ENCODE measurements at regions of chr16 and their contacts with region 1.

Region 1: DNA sequence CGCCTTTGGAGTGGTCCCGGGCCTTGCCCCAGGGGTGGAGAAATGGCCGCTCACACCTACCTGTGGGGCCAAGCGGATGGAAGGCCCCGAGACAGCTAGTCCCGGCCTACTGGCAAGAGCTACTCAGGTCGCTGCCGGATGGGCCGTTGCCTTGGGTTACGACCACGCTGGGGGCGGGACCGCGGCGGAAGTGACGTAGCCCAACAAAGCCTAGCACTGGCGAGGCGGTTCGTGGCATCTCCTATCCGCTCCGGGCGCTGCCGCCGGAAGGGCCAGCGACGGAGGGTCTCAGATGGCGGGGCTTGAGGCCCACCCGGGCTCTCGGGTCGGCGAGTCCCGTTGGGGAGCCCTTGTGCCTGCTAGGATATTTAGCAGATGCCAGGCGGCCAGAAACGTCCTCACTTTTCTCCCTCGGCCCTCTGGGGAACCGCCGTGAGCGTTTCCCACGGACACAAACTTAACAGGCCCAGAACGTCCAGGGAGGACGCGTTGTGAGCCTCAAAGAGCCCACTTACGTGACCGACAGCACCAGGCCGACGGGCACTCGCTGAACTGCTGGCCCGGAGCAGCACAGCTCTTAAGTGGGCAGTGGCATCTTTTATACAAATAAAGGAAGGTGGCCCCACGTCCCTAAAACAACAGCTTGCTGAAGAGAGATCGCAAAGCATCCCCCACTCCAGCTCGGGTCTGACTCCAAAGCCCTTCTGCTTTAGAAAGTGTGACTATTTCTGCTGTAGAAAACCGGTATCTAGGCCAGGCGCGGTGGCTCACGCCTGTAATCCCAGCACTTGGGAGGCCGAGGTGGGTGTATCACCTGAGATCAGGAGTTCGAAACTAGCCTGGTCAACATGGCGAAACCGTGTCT is at the start of gene C16orf46:
- DNase-seq: peak; percentile 98
- H3K4me3 ChIP-seq: peak within 1 kb of the TSS; percentile 5 to 38 (median 14)
- H3K27ac ChIP-seq: peak within 1 kb of the TSS; percentile 88 to 96 (median 93)
- H3K4me1 ChIP-seq: peaks cover 21 to 24% of the 10 kb centered on the region in 2 donors
- H3K27me3 ChIP-seq: no peaks in the 10 kb centered on the region
- CTCF ChIP-seq: peak in 2 of 6 experiments; percentile 6 to 12
- POLR2A ChIP-seq: peak; percentile 5 to 84
- total RNA-seq, gene C16orf46: 3.1 to 14.2 (median 9.7) TPM

Region 2: DNA sequence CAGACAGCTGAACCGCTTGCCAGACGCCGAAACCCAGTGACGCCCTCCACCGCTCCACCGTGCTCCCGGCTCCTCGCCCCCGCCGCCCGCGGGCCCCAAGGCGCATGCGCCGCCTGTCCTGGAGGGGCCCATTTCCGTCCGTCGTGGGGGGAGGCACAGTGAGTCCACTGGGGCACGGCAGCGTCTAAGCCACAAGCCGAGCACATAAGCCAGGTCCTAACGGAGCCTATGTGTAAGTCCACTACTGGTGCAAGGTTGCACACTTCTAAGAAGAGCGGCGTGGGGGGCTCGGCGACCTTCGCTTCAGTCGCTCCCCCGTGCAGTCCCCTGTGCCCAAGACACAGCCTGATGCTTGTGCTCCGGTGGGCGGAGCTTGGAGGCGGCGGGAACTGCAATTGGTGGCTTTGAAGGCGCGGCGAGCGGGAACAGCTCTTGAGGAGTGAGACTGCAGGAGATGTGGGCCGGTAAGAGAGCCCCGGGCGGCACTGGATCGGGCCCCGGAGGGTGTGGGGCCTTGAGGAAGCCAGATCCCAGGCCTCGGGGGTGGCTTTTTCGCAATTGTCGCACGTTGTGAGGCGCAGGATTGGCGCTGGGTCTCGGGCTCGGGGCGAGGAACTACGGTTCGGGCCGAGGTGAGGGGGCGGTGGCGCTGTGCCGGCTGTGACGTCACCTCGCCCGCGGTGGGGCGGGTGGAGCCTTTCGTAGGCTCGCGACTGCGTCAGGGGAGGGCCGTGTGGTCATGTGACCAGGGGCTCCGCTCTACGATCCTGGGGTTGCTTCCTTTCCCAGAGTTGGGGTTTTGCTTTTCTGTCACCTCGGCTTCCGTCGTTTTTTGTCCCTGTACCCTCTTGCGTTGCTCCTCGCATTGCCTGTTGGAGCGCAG is 70.3 kb before region 1 on chr16 and contains the starts of genes CENPN and CMC2:
- intact Hi-C with region 1: loop called (anchors 10 kb)
- DNase-seq: peak; percentile 100
- H3K4me3 ChIP-seq: peak within 1 kb of the TSS; percentile 59 to 98 (median 85)
- H3K27ac ChIP-seq: peak within 1 kb of the TSS; percentile 93 to 99 (median 94)
- H3K4me1 ChIP-seq: peaks cover 10 to 22% of the 10 kb centered on the region in 2 donors
- H3K27me3 ChIP-seq: no peaks in the 10 kb centered on the region
- CTCF ChIP-seq: peak in 1 of 6 experiments; percentile 18
- POLR2A ChIP-seq: peak in 1 of 2 donors; percentile 91
- total RNA-seq, gene CENPN: 5.8 to 14.4 (median 6.7) TPM
- total RNA-seq, gene CMC2: 36.8 to 89.1 (median 59.7) TPM

Region 3: DNA sequence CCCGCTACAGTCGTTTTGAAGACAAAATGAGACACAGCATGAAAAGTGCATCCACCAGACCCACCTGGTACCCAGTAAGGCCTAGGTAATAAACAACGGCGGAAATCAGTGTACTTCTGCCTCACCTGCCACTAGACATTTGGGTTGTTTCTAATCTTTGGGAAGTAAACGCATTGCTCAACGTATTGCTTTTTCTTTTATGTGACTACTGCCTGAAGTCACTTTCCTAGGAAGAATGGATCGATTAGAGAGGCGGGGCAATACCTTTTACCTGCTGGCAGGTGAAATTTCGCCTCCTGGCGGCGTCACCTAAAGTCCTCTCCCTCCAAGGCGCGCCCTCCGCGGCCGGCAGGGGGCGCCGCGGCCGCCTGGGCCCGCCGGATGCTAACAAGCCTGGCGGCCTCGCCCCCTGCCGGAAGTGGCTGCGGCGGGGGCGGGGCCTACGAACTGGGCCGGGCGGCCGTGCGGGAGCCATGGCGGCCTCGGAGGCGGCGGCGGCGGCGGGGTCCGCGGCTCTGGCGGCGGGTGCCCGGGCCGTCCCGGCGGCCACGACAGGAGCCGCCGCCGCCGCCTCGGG is 41.8 kb before region 1 on chr16 and contains the start of gene ATMIN:
- intact Hi-C with region 1: loop called (anchors 5 kb)
- DNase-seq: peak; percentile 86 to 89
- H3K4me3 ChIP-seq: peak within 1 kb of the TSS; percentile 38 to 64 (median 59)
- H3K27ac ChIP-seq: peak within 1 kb of the TSS in 2 of 3 donors; percentile 28 to 51
- H3K4me1 ChIP-seq: peaks cover 24 to 31% of the 10 kb centered on the region in 2 donors
- H3K27me3 ChIP-seq: no peaks in the 10 kb centered on the region
- CTCF ChIP-seq: peak; percentile 86 to 99 (median 94)
- POLR2A ChIP-seq: peak; percentile 23 to 90
- total RNA-seq, gene ATMIN: 49.2 to 57.6 (median 53.3) TPM

Region 4: DNA sequence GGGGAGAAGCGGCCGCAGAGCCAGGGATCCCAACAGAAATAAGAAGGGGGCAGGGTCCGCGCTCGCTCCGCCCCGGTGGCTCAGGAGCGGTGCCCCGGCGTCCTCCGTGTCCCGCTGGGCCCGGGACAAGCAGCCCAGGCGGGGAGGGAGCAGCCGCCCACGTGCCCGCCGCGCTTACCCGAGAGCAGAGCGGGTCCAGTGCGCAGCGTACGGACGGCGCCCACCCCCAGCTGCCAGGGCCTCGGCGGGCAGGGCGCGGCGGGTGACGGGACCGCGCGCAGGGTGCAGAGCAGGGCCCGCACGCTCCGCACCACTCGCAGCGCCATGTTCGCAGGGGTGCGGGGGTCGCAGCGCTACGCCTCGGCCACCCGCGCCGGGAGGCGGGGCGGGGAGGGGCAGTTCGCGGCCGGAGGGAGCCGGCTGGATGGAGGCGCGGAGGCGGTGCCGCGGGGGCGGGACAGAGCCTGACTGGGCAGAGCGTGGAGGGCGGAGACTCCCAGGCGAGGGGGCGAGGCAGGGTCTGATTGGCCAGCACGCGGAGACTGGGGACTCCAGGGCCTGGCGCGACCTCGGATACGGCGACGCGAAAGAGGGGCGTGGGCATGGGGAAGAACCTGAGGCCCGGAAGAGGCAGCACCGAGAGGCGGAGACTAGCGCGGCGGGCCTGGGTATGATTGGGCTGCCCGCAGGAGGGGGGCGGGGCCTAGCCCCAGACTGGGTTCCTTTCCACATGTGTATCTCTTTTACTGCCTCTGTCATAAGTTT is 18.8 kb after region 1 on chr16 and contains the start of gene GCSH:
- intact Hi-C with region 1: loop called (anchors 2 kb)
- DNase-seq: peak; percentile 100
- H3K4me3 ChIP-seq: peak within 1 kb of the TSS; percentile 37 to 62 (median 61)
- H3K27ac ChIP-seq: peak within 1 kb of the TSS; percentile 76 to 87 (median 87)
- H3K4me1 ChIP-seq: peaks cover 23 to 29% of the 10 kb centered on the region in 2 donors
- H3K27me3 ChIP-seq: no peaks in the 10 kb centered on the region
- CTCF ChIP-seq: no peak
- POLR2A ChIP-seq: peak in 1 of 2 donors; percentile 76
- total RNA-seq, gene GCSH: 48.8 to 82.1 (median 60.7) TPM

Region 5: GRCh38 chr16:81445975-81446906 is 368.9 kb after region 1 on chr16:
- intact Hi-C with region 1: no loop called
- DNase-seq: peak; percentile 44 to 45
- H3K4me3 ChIP-seq: peak overlapping the region; percentile 42 to 69 (median 44)
- H3K27ac ChIP-seq: peak overlapping the region; percentile 55 to 81 (median 77)
- H3K4me1 ChIP-seq: peaks cover 37 to 40% of the 10 kb centered on the region in 2 donors
- H3K27me3 ChIP-seq: no peaks in the 10 kb centered on the region
- CTCF ChIP-seq: no peak
- POLR2A ChIP-seq: no peak